T-cell (primary cell): ENCODE measurements at regions of chr19 and their contacts with region 1.

Region 1: GRCh38 chr19:18855647-18856384 is 24.1 kb downstream of the UPF1 start:
- DNase-seq: no peak
- ATAC-seq: no peak
- H3K4me3 ChIP-seq: no peak overlapping the region
- H3K4me3 Mint-ChIP-seq: no peak overlapping the region
- H3K27ac ChIP-seq: no peak overlapping the region
- H3K27ac Mint-ChIP-seq: no peak overlapping the region
- H3K4me1 ChIP-seq: peaks cover 0 to under 1% of the 10 kb centered on the region in 2 experiments
- H3K4me1 Mint-ChIP-seq: no peaks in the 10 kb centered on the region
- H3K27me3 ChIP-seq: no peaks in the 10 kb centered on the region
- H3K27me3 Mint-ChIP-seq: no peaks in the 10 kb centered on the region

Region 2: GRCh38 chr19:18831524-18832305 is 24.1 kb before region 1 on chr19 and contains the start of gene UPF1:
- CTCF ChIA-PET with region 1: no interaction called
- POLR2A ChIA-PET with region 1: interaction called in 1 of 2 experiments, 12 read pairs
- DNase-seq: peak; percentile 84 to 99 (median 96)
- ATAC-seq: peak; percentile 79 to 90 (median 85)
- H3K4me3 ChIP-seq: peak within 1 kb of the TSS; percentile 82 to 91
- H3K4me3 Mint-ChIP-seq: peak within 1 kb of the TSS; percentile 89 to 91 (median 90)
- H3K27ac ChIP-seq: peak within 1 kb of the TSS; percentile 73
- H3K27ac Mint-ChIP-seq: peak within 1 kb of the TSS; percentile 88 to 90
- H3K4me1 ChIP-seq: peaks cover 17 to 48% of the 10 kb centered on the region in 2 experiments
- H3K4me1 Mint-ChIP-seq: peaks cover 38 to 40% (median 38%) of the 10 kb centered on the region in 3 donors
- H3K27me3 ChIP-seq: peaks cover 0 to 7% of the 10 kb centered on the region in 2 experiments
- H3K27me3 Mint-ChIP-seq: peaks cover 3 to 5% of the 10 kb centered on the region in 2 donors
- total RNA-seq, gene UPF1: 114 to 143 (median 127) TPM